BJ (cell line): ENCODE measurements at regions of chr1 and their contacts with region 1.

Region 1: DNA sequence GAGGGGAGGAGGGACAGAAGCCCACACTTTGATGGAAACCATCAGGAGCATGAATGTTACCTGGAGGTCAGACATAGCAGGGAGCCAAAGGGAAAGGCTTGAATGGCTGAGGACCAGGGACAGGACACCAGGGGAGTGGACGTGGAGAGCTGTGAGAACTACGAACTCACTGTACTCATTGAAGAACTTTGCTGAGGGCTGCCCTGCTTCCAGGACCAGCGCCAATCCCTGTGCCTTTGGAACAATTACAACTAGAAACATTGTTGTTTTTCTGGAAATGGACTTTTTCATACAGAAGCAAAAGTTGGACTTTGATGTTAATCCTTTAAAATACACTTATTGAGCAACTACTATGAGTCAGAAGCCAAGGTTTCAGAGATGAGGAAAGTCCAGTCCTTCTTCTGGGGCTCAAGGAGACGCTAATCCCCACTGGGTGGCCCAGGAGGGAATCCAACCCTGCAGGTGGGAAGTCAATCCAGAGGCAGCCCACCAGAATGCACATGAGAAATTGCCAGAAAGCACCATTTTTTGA is 12.9 kb downstream of the TSPAN2 start:
- DNase-seq: no peak
- H3K4me3 ChIP-seq: no peak overlapping the region
- H3K27me3 ChIP-seq: peaks cover 4% of the 10 kb centered on the region; the same call in 1 of the 2 replicates
- CTCF ChIP-seq: no peak

Region 2: DNA sequence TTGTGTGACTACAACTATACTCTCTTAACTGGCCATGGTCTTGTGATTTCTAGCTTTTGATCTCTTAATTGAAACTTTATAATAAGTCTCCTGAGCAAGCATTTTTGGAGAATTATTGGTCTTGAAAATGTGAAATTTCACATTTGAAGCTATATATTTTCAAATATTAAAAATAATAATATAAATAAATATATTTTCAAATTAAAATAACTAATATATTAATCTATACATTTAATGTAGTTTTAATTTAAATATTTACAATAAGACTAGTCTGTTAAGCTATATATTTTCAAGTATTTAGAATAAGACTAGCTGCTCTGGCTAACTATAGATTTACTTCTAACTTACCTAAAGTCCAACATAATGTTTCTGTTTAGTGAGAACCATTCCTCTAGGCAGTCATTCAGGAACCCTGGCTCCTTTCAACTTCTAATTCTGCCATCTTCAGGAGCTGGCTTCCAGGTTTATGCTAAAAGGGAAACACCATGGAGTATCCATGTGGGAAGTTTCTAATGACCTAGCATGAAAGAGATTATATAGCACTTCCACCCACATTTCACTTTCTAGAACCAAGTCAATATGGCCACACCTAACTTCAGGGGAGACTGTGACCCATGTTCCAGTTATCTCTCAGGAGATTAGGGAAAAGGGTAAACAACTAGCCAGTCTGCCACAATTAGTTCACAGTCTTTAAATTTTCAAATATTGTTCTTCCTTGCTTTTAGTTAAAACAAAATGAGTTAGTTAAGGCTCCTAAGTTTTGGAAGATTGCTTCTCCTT is 78.8 kb before region 1 on chr1:
- CTCF ChIA-PET with region 1: no interaction called
- POLR2A ChIA-PET with region 1: interaction called, 14 read pairs
- DNase-seq: no peak
- H3K4me3 ChIP-seq: no peak overlapping the region
- H3K27me3 ChIP-seq: 0 out of 2 replicates have a peak, but pooled peaks cover 2% of the 10 kb centered on the region
- CTCF ChIP-seq: no peak

Region 3: GRCh38 chr1:115041654-115042053 is 34.8 kb before region 1 on chr1:
- CTCF ChIA-PET with region 1: no interaction called
- POLR2A ChIA-PET with region 1: no interaction called
- DNase-seq: no peak
- H3K4me3 ChIP-seq: no peak overlapping the region
- H3K27me3 ChIP-seq: no peaks in the 10 kb centered on the region; the same call in 1 of the 2 replicates
- CTCF ChIP-seq: peak; percentile 23; the same call in 1 of the 2 replicates

Region 4: GRCh38 chr1:115089420-115090185 is 13.2 kb after region 1 on chr1 and contains the start of gene TSPAN2:
- CTCF ChIA-PET with region 1: interaction called, 17 read pairs
- POLR2A ChIA-PET with region 1: interaction called, 4 read pairs
- DNase-seq: no peak
- H3K4me3 ChIP-seq: peak within 1 kb of the TSS; percentile 59
- H3K27me3 ChIP-seq: peaks cover 3% of the 10 kb centered on the region; the same call in 1 of the 2 replicates
- CTCF ChIP-seq: peak; percentile 53
- polyA plus RNA-seq, gene TSPAN2: 3.9 and 5.4 TPM in 2 replicates

Region 5: GRCh38 chr1:115296981-115297380 is 220.5 kb after region 1 on chr1:
- CTCF ChIA-PET with region 1: no interaction called
- POLR2A ChIA-PET with region 1: no interaction called
- DNase-seq: no peak
- H3K4me3 ChIP-seq: no peak overlapping the region
- H3K27me3 ChIP-seq: no peaks in the 10 kb centered on the region
- CTCF ChIP-seq: no peak